CD4-positive, alpha-beta T cell (primary cell): ENCODE measurements at regions of chr16 and their contacts with region 1.

Region 1: GRCh38 chr16:56576585-56577293 is 11.9 kb downstream of the MT4 start:
- DNase-seq: peak; percentile 76 to 94 (median 86)
- ATAC-seq: peak; percentile 100
- H3K4me3 ChIP-seq: no peak overlapping the region
- H3K4me3 Mint-ChIP-seq: no peak overlapping the region
- H3K27ac ChIP-seq: no peak overlapping the region
- H3K27ac Mint-ChIP-seq: no peak overlapping the region
- H3K4me1 ChIP-seq: peaks cover 8% of the 10 kb centered on the region
- H3K4me1 Mint-ChIP-seq: peaks cover 9% of the 10 kb centered on the region
- H3K27me3 ChIP-seq: no peaks in the 10 kb centered on the region
- H3K27me3 Mint-ChIP-seq: no peaks in the 10 kb centered on the region
- CTCF ChIP-seq: peak; percentile 87

Region 2: DNA sequence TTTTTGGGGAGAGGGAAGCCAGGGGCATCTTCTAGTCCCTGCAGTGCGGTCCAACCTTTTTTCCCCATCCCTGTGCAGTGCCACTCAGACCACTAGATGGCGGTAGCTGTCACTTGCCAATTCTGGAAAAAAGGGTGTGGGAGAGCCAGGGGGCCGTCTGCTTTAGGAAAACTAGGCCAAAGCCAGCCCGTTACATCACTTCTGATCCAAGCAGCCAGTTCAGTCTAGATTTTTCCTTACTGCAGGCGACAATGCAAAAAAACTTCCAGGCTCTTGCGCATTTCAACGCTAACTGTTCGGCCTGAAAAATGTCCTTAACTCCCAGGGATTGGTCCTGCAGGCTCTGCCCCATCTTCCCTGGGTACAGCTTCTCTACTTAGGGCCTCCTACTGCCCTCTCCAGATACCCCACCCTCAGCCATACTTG is 632.3 kb before region 1 on chr16:
- CTCF ChIA-PET with region 1: no interaction called
- POLR2A ChIA-PET with region 1: no interaction called
- intact Hi-C with region 1: loop called in 1 of 2 experiments (anchors 10 kb)
- DNase-seq: peak; percentile 21 to 70 (median 34)
- ATAC-seq: peak; percentile 37
- H3K4me3 ChIP-seq: no peak overlapping the region
- H3K4me3 Mint-ChIP-seq: no peak overlapping the region
- H3K27ac ChIP-seq: no peak overlapping the region
- H3K27ac Mint-ChIP-seq: no peak overlapping the region
- H3K4me1 ChIP-seq: no peaks in the 10 kb centered on the region
- H3K4me1 Mint-ChIP-seq: no peaks in the 10 kb centered on the region
- H3K27me3 ChIP-seq: peaks cover 14 to 21% of the 10 kb centered on the region in 2 experiments
- H3K27me3 Mint-ChIP-seq: peaks cover 71% of the 10 kb centered on the region
- CTCF ChIP-seq: peak; percentile 81

Region 3: DNA sequence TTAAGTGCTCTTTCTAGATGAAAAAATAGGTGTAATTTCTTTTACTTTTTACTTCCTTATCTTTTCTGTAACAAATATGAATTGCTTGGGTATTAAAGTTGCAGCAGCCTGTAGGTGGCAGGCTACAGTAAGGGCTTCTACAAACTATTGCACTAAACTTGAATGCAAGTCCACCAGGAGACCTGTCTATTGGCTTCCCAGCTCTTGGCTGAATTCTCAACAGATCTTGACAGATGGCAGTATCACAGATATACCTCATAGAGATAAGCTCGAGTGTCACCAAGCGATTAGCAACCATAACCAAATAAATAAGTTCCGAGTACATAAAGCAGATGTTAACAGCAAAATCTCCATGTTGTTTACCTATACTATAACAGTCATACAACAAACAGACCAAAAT is 62.8 kb before region 1 on chr16:
- CTCF ChIA-PET with region 1: no interaction called
- POLR2A ChIA-PET with region 1: no interaction called
- intact Hi-C with region 1: loop called (anchors 1 to 2 kb)
- DNase-seq: peak in 13 of 14 experiments; percentile 15 to 78 (median 33)
- ATAC-seq: peak; percentile 96
- H3K4me3 ChIP-seq: no peak overlapping the region
- H3K4me3 Mint-ChIP-seq: peak overlapping the region; percentile 46
- H3K27ac ChIP-seq: no peak overlapping the region
- H3K27ac Mint-ChIP-seq: peak overlapping the region; percentile 13
- H3K4me1 ChIP-seq: peaks cover 18% of the 10 kb centered on the region
- H3K4me1 Mint-ChIP-seq: peaks cover 58% of the 10 kb centered on the region
- H3K27me3 ChIP-seq: no peaks in the 10 kb centered on the region
- H3K27me3 Mint-ChIP-seq: no peaks in the 10 kb centered on the region
- CTCF ChIP-seq: peak; percentile 75

Region 4: GRCh38 chr16:56564773-56565477 is 11.8 kb before region 1 on chr16 and contains the start of gene MT4:
- CTCF ChIA-PET with region 1: no interaction called
- POLR2A ChIA-PET with region 1: no interaction called
- intact Hi-C with region 1: no loop called
- DNase-seq: no peak
- ATAC-seq: no peak
- H3K4me3 ChIP-seq: no peak within 1 kb of the TSS
- H3K4me3 Mint-ChIP-seq: no peak within 1 kb of the TSS
- H3K27ac ChIP-seq: no peak within 1 kb of the TSS
- H3K27ac Mint-ChIP-seq: no peak within 1 kb of the TSS
- H3K4me1 ChIP-seq: no peaks in the 10 kb centered on the region
- H3K4me1 Mint-ChIP-seq: no peaks in the 10 kb centered on the region
- H3K27me3 ChIP-seq: peaks cover 0 to 3% of the 10 kb centered on the region in 2 experiments
- H3K27me3 Mint-ChIP-seq: peaks cover 4% of the 10 kb centered on the region
- CTCF ChIP-seq: no peak
- total RNA-seq, gene MT4: not detected

Region 5: DNA sequence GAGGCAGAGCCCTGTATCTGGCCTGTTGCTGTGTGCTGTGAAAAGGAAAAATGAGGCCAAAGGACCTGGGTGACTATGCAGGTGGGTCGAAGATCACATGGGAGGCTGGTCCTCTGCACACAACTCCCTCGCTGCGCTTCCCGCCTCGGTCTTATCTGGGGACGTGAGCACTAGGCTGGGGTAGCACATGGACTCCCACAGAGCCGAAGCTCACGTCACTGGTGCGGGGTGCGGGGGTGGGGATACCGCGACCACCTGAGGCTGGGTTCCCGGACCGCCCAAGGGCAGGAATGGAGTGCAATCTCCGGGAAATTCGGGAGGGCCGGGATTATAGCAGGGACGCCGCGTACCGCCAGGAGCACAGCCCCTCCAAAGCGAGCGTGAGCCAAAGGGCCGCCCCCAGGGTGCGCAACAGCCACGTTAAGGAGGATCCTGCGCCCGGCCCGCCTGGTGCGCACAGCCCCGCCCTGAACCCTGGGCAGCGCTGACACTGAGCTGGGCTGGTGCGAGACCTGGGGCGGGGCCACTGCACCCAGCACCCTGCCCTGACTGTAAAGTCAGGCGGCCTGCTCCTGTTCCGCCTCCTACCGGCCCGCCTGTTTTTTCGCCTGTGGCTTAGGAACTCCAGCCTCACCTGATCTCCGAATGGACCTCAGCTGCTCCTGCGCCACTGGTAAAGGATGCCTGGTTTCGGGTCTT is 66.5 kb after region 1 on chr16:
- CTCF ChIA-PET with region 1: interaction called, 10 read pairs
- POLR2A ChIA-PET with region 1: no interaction called
- intact Hi-C with region 1: loop called (anchors 1 kb)
- DNase-seq: peak; percentile 48 to 90 (median 70)
- ATAC-seq: peak; percentile 99
- H3K4me3 ChIP-seq: peak overlapping the region; percentile 46
- H3K4me3 Mint-ChIP-seq: peak overlapping the region; percentile 74
- H3K27ac ChIP-seq: no peak overlapping the region
- H3K27ac Mint-ChIP-seq: no peak overlapping the region
- H3K4me1 ChIP-seq: peaks cover 25% of the 10 kb centered on the region
- H3K4me1 Mint-ChIP-seq: peaks cover 25% of the 10 kb centered on the region
- H3K27me3 ChIP-seq: peaks cover 19 to 26% of the 10 kb centered on the region in 2 experiments
- H3K27me3 Mint-ChIP-seq: peaks cover 43% of the 10 kb centered on the region
- CTCF ChIP-seq: peak; percentile 46

Region 6: GRCh38 chr16:56681939-56682702 is 105.4 kb after region 1 on chr16 and contains the start of gene MT1X:
- CTCF ChIA-PET with region 1: interaction called, 6 read pairs
- POLR2A ChIA-PET with region 1: no interaction called
- intact Hi-C with region 1: loop called in 1 of 2 experiments (anchors 5 kb)
- DNase-seq: peak; percentile 72 to 94 (median 86)
- ATAC-seq: peak; percentile 99
- H3K4me3 ChIP-seq: peak within 1 kb of the TSS; percentile 83
- H3K4me3 Mint-ChIP-seq: peak within 1 kb of the TSS; percentile 96
- H3K27ac ChIP-seq: peak within 1 kb of the TSS; percentile 50 to 71
- H3K27ac Mint-ChIP-seq: peak within 1 kb of the TSS; percentile 93
- H3K4me1 ChIP-seq: peaks cover 28% of the 10 kb centered on the region
- H3K4me1 Mint-ChIP-seq: peaks cover 27% of the 10 kb centered on the region
- H3K27me3 ChIP-seq: no peaks in the 10 kb centered on the region
- H3K27me3 Mint-ChIP-seq: no peaks in the 10 kb centered on the region
- CTCF ChIP-seq: no peak
- total RNA-seq, gene MT1X: 10.9 to 14.1 TPM

Region 7: GRCh38 chr16:56800355-56800754 is 223.6 kb after region 1 on chr16:
- CTCF ChIA-PET with region 1: no interaction called
- POLR2A ChIA-PET with region 1: no interaction called
- intact Hi-C with region 1: no loop called
- DNase-seq: no peak
- ATAC-seq: no peak
- H3K4me3 ChIP-seq: no peak overlapping the region
- H3K4me3 Mint-ChIP-seq: no peak overlapping the region
- H3K27ac ChIP-seq: no peak overlapping the region
- H3K27ac Mint-ChIP-seq: no peak overlapping the region
- H3K4me1 ChIP-seq: no peaks in the 10 kb centered on the region
- H3K4me1 Mint-ChIP-seq: no peaks in the 10 kb centered on the region
- H3K27me3 ChIP-seq: no peaks in the 10 kb centered on the region
- H3K27me3 Mint-ChIP-seq: no peaks in the 10 kb centered on the region
- CTCF ChIP-seq: no peak